ENCODE measurements at regions of chr3 and their contacts with region 1.

Region 1: GRCh38 chr3:135918580-135918962 is 47.0 kb upstream of the PPP2R3A start:
- DNase-seq: no peak
- ATAC-seq: no peak
- H3K4me3 ChIP-seq: no peak overlapping the region
- H3K27ac ChIP-seq: no peak overlapping the region
- H3K4me1 ChIP-seq: no peaks in the 10 kb centered on the region
- H3K27me3 ChIP-seq: no peaks in the 10 kb centered on the region
- CTCF ChIP-seq: peak; percentile 31

Region 2: DNA sequence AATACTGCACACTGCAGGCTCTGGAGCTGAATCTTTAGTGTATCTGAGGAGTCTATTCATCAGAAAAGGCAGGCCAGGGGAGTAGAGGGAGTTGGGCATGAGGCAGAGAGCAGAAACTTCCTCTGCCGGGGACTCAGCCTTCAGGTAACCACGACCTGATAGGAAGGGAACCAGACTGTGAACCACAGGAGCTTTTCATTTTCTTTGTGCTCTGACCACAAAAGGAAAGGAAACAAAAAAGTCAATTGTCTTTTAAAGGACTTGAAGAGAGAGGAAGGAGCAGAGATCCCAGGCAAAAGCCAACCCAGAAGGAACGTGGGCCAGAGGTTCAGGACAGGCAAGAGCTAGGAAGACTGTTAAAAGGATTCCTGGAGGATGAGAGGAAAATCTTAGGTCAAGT is 550.3 kb before region 1 on chr3:
- intact Hi-C with region 1: no loop called
- DNase-seq: no peak
- ATAC-seq: no peak
- H3K4me3 ChIP-seq: no peak overlapping the region
- H3K27ac ChIP-seq: no peak overlapping the region
- H3K4me1 ChIP-seq: no peaks in the 10 kb centered on the region
- H3K27me3 ChIP-seq: no peaks in the 10 kb centered on the region
- CTCF ChIP-seq: no peak

Region 3: DNA sequence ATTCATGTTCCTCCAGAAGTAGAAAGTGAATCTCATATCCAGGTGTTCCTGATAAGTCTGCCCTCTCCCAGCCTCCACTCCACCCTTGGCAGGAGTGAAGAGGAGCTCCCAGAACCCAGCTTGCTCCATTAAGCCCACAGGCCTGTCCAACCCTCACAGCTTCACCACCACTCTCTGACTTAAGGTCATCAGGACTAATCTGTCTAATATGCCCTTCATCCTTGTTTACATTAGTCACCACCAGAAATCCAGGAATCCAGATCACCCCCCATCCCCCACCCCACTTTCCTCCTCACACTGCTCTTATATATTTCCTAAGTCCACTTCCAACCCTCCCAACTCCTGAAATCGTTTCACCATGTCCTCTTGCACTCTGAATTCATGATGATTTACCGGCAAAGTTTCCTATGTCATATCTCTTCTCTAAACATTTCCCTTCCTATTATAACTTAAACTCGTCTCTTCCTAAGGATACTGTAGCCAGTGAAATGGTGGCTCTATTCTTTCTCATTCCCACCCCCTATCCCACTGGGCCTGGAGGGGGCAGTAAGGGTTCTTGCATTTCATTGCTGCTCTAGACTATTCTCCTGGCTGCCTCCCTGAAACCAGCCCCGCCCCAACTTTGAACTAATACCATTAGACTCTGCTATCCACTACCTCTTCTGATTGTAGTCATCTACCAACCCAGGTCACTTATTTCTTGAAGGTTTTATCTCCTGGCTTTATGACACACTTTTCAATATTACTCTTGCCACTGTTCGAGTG is 90.3 kb after region 1 on chr3:
- intact Hi-C with region 1: no loop called
- DNase-seq: no peak
- ATAC-seq: no peak
- H3K4me3 ChIP-seq: no peak overlapping the region
- H3K27ac ChIP-seq: no peak overlapping the region
- H3K4me1 ChIP-seq: no peaks in the 10 kb centered on the region
- H3K27me3 ChIP-seq: no peaks in the 10 kb centered on the region
- CTCF ChIP-seq: no peak

Region 4: GRCh38 chr3:136042608-136043221 is 124.1 kb after region 1 on chr3:
- intact Hi-C with region 1: loop called (anchors 10 kb)
- DNase-seq: no peak
- ATAC-seq: peak in 1 of 2 donors; percentile 21
- H3K4me3 ChIP-seq: no peak overlapping the region
- H3K27ac ChIP-seq: no peak overlapping the region
- H3K4me1 ChIP-seq: no peaks in the 10 kb centered on the region
- H3K27me3 ChIP-seq: no peaks in the 10 kb centered on the region
- CTCF ChIP-seq: peak; percentile 63